ENCODE measurements at regions of chr3 and their contacts with region 1.

Region 1: DNA sequence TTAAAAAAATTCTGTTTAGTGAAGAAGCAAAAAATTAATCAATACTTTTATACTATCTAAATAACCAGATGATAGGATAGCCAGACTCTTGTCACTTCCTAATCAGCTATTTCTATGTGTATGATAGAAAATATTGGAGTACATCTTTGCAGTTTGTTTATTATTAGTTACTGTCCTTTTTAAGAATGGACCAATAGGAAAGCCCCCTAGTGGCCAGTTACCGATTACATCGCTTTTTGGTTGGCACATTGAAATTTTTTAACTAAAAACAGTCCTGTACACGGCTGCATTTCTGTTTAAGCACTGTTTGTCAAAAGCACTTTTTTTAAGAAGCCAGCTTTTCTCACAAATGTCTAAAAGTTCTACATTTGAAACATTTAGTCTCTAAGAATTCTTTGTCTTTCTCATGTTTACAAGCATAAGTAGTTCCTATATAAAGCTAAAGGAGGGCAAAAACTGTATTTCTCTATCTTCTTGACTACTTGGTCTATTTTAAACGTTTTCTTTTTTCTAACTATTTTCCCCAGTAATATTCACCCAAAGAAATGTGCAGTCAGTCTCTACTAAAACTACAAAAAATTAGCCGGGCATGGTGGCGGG is 253.2 kb upstream of the LRTM1 start:
- DNase-seq: peak in 1 of 5 donors; percentile 40
- H3K4me3 ChIP-seq: no peak overlapping the region
- H3K27ac ChIP-seq: no peak overlapping the region
- H3K4me1 ChIP-seq: no peaks in the 10 kb centered on the region
- H3K27me3 ChIP-seq: no peaks in the 10 kb centered on the region
- CTCF ChIP-seq: peak; percentile 47 to 64 (median 57)
- EP300 ChIP-seq: no peak
- POLR2A ChIP-seq: no peak

Region 2: GRCh38 chr3:53744351-53744750 is 1436.7 kb before region 1 on chr3:
- intact Hi-C with region 1: loop called in 1 of 4 experiments (anchors 5 kb)
- DNase-seq: no peak
- H3K4me3 ChIP-seq: no peak overlapping the region
- H3K27ac ChIP-seq: no peak overlapping the region
- H3K4me1 ChIP-seq: no peaks in the 10 kb centered on the region
- H3K27me3 ChIP-seq: no peaks in the 10 kb centered on the region
- CTCF ChIP-seq: no peak
- EP300 ChIP-seq: no peak
- POLR2A ChIP-seq: no peak

Region 3: DNA sequence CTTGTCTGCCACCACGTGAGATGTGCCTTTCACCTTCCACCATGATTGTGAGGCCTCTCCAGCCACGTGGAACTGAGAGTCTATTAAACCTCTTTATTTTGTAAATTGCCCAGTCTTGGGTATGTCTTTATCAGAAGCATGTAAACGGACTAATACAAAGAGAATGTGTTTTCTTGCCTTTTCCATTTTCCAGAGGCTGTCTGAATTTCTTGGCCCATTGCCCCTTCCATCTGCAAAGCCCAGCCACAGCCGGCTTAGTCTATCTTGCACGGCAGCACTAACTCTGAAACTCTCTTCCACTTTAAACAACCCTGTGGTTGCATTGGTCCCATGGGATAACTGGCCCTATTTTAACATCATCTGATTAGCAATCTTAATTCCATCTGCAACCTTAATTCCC is 468.5 kb before region 1 on chr3:
- intact Hi-C with region 1: no loop called
- DNase-seq: no peak
- H3K4me3 ChIP-seq: no peak overlapping the region
- H3K27ac ChIP-seq: no peak overlapping the region
- H3K4me1 ChIP-seq: no peaks in the 10 kb centered on the region
- H3K27me3 ChIP-seq: no peaks in the 10 kb centered on the region
- CTCF ChIP-seq: no peak
- EP300 ChIP-seq: no peak
- POLR2A ChIP-seq: no peak

Region 4: DNA sequence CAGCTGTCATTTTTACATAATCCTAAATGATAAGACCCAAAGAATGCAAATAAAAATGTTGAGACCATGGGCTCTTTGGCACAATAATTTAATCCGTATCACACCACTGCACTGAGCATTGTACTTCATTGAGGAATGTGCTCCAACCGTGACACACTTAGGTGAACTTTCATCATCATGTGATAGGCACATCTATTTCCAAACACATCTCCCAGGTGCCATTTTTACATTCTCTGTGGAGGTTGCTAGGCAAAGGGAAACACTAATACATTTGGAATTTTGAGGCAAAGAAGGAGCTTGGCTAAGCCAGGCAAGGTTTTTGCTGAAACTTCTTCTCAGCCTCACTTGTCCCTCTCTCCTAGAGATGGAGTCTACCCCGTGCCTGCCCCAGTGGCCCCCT is 321.9 kb before region 1 on chr3:
- intact Hi-C with region 1: loop called in 2 of 4 experiments (anchors 5 to 10 kb)
- DNase-seq: no peak
- H3K4me3 ChIP-seq: no peak overlapping the region
- H3K27ac ChIP-seq: no peak overlapping the region
- H3K4me1 ChIP-seq: no peaks in the 10 kb centered on the region
- H3K27me3 ChIP-seq: no peaks in the 10 kb centered on the region
- CTCF ChIP-seq: no peak
- EP300 ChIP-seq: no peak
- POLR2A ChIP-seq: no peak

Region 5: DNA sequence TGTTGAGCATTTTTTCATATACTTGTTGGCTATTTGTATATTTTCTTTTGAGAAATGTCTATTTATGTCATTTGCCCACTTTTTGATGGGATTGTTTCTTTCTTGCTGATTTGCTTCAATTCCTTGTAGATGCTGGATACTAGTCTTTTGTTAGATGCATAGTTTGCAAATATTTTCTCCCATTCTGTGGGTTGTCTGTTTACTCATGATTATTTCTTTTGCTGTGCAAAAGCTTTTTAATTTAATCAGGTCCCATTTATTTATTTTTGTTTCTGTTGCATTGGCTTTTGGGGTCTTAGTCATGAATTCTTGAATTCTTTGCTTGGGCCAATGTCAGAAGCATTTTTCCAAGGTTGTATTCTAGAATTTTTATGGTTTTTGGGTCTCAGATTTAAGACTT is 54.4 kb after region 1 on chr3:
- intact Hi-C with region 1: no loop called
- DNase-seq: no peak
- H3K4me3 ChIP-seq: no peak overlapping the region
- H3K27ac ChIP-seq: no peak overlapping the region
- H3K4me1 ChIP-seq: no peaks in the 10 kb centered on the region
- H3K27me3 ChIP-seq: no peaks in the 10 kb centered on the region
- CTCF ChIP-seq: no peak
- EP300 ChIP-seq: no peak
- POLR2A ChIP-seq: no peak

Measured in ovary (tissue), 10 donors.